K562 (cell line): ENCODE measurements at regions of chr15 and their contacts with region 1.

Region 1: DNA sequence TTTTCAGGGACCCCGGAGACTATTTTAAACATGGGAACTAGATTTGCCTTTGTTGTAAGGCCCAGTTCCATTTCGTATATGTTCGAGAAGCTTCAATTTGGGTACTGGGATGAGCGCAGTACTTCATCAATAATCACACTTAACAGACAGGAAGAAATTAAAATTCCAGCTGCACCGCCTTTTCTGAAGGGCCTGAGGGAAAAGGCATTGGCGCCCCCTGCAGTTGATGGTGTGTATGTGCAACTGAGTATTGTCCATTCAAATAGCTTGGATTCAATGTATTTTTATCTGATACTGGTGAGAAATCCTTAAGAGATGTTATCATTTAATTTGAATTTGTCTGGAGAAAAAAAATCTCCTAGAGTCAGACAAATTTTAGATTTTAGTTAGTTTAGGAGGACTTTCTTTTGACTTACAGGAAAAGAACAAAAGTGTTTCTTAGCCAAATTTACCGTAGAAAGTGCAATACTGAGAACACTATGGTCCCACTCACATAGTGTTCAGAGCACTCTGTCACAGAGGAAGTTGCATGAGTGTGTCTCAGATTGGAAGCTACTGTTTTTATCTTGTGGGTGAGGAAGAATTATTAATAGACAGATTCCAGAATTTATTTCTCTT is 5.4 kb upstream of the ALDH1A2 start:
- DNase-seq: peak; percentile 42 to 84 (median 52)
- ATAC-seq: no peak
- H3K4me3 ChIP-seq: no peak overlapping the region
- H3K27ac ChIP-seq: no peak overlapping the region
- H3K4me1 ChIP-seq: peaks cover 5 to 6% of the 10 kb centered on the region in 2 experiments; a peak in 3 of 5 replicates
- H3K27me3 ChIP-seq: no peaks in the 10 kb centered on the region
- CTCF ChIP-seq: peak; percentile 86 to 94 (median 86)
- EP300 ChIP-seq: no peak
- POLR2A ChIP-seq: no peak
- RAD21 ChIP-seq: peak; percentile 89 to 93

Region 2: GRCh38 chr15:57640935-57641682 is 429.8 kb before region 1 on chr15:
- CTCF ChIA-PET with region 1: no interaction called
- POLR2A ChIA-PET with region 1: no interaction called
- in situ Hi-C with region 1: no loop called
- intact Hi-C with region 1: loop called (anchors 5 kb)
- DNase-seq: peak; percentile 19 to 43 (median 27)
- ATAC-seq: peak; percentile 81
- H3K4me3 ChIP-seq: no peak overlapping the region
- H3K27ac ChIP-seq: no peak overlapping the region
- H3K4me1 ChIP-seq: no peaks in the 10 kb centered on the region
- H3K27me3 ChIP-seq: peaks cover 13 to 14% of the 10 kb centered on the region in 2 experiments
- CTCF ChIP-seq: peak; percentile 45 to 49 (median 46); a peak in 5 of 6 replicates
- EP300 ChIP-seq: no peak
- POLR2A ChIP-seq: no peak
- RAD21 ChIP-seq: peak in 1 of 2 experiments; percentile 55; a peak in 3 of 4 replicates

Region 3: GRCh38 chr15:57732526-57733331 is 338.2 kb before region 1 on chr15:
- CTCF ChIA-PET with region 1: interaction called, 3 read pairs
- POLR2A ChIA-PET with region 1: no interaction called
- in situ Hi-C with region 1: loop called (anchors 25 kb)
- intact Hi-C with region 1: loop called (anchors 5 kb)
- DNase-seq: peak; percentile 56 to 78 (median 65)
- ATAC-seq: peak; percentile 92
- H3K4me3 ChIP-seq: no peak overlapping the region
- H3K27ac ChIP-seq: no peak overlapping the region; the same call in 2 of the 3 replicates
- H3K4me1 ChIP-seq: peaks cover 0 to 14% of the 10 kb centered on the region in 2 experiments; a peak in 3 of 5 replicates
- H3K27me3 ChIP-seq: no peaks in the 10 kb centered on the region; a peak in 1 of 5 replicates
- CTCF ChIP-seq: peak; percentile 74 to 85 (median 80)
- EP300 ChIP-seq: peak; percentile 59; the same call in 1 of the 2 replicates
- POLR2A ChIP-seq: no peak
- RAD21 ChIP-seq: peak; percentile 44 to 61

Region 4: DNA sequence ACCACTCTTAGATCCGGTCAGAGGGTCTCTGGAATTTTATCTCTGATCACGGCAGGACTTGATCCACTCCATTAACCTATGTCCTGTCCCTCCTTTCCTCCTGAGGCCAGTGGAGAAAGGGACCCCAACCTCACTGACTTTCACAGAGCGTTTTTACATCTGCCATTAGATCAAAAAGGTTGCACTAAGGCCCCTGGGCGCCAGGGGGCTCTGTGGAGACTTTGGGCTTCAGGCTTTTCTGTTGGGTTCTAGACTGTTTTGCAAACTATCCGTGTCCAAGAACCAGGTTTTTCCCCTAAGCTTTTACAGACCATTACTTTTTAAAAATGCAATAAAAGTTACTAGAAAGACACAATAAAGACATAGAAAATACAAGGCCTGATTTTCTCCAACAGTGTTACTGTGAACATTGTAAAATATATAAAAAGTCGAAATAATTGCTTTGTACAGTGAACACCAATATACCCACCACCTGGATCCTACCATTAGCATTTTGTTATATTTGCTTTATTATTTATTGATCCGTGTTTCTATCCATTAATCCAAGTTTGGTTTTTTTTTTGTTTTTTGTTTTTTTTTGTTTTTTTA is 204.7 kb before region 1 on chr15:
- CTCF ChIA-PET with region 1: interaction called, 10 read pairs
- POLR2A ChIA-PET with region 1: interaction called, 3 read pairs
- in situ Hi-C with region 1: loop called (anchors 5 kb)
- intact Hi-C with region 1: loop called (anchors 1 kb)
- DNase-seq: peak; percentile 47 to 82 (median 52)
- ATAC-seq: peak; percentile 93
- H3K4me3 ChIP-seq: no peak overlapping the region
- H3K27ac ChIP-seq: no peak overlapping the region
- H3K4me1 ChIP-seq: no peaks in the 10 kb centered on the region
- H3K27me3 ChIP-seq: peaks cover 0 to 8% of the 10 kb centered on the region in 2 experiments; a peak in 2 of 5 replicates
- CTCF ChIP-seq: peak; percentile 80 to 87 (median 87)
- EP300 ChIP-seq: no peak
- POLR2A ChIP-seq: no peak
- RAD21 ChIP-seq: peak; percentile 60 to 75